ENCODE measurements at regions of chr21 and their contacts with region 1.

Region 1: GRCh38 chr21:34510148-34511142 is 1.6 kb downstream of the KCNE1 start:
- DNase-seq: peak; percentile 78
- H3K4me3 ChIP-seq: no peak overlapping the region
- H3K27ac ChIP-seq: no peak overlapping the region
- H3K4me1 ChIP-seq: no peaks in the 10 kb centered on the region
- H3K27me3 ChIP-seq: no peaks in the 10 kb centered on the region
- CTCF ChIP-seq: peak; percentile 69 to 94
- POLR2A ChIP-seq: no peak

Region 2: GRCh38 chr21:34498623-34499022 is 11.8 kb before region 1 on chr21:
- CTCF ChIA-PET with region 1: interaction called, 34 read pairs
- POLR2A ChIA-PET with region 1: no interaction called
- dilution Hi-C with region 1: no loop called
- intact Hi-C with region 1: no loop called
- DNase-seq: no peak
- H3K4me3 ChIP-seq: no peak overlapping the region
- H3K27ac ChIP-seq: no peak overlapping the region
- H3K4me1 ChIP-seq: no peaks in the 10 kb centered on the region
- H3K27me3 ChIP-seq: peaks cover 18 to 19% of the 10 kb centered on the region in 2 experiments
- CTCF ChIP-seq: no peak
- POLR2A ChIP-seq: no peak

Region 3: DNA sequence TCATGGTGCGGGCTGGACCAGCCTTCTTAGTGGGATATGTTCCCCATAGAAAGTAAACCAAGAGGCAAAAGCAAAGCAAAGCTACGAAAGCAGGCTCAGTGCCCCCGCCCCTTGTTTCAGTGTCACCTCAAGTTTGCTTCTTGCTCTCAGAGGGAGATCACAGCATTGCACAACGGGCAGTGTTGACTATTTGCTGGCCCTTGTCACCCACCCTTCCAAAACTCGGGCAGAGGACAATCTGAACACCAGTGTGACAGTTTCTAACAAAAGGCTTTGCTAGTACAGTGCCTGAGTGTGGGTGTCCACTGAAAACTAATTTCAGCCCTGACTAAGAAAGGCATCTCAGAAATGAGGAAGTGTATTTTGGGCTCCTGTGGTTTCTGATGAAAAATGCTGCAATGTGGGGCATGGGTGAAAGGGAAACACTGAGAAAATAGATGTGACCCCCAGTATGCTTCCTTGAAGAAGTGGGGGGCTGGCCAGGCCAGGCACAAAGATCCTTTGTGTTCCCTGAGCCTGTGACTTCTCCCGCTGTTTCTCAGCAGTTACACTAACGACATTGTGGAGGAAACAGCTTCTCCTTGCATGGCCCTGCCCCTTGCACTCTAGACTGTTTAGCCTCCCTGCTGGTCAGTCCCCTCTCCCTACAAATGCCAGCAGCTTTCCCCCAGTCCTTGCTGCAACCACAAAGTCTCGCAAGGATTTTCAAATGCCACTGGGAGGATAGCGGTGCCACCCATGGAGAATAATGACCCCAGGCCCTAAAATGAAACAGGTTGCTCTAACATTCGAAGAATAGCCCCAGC is 34.8 kb after region 1 on chr21:
- CTCF ChIA-PET with region 1: interaction called, 113 read pairs
- POLR2A ChIA-PET with region 1: no interaction called
- dilution Hi-C with region 1: no loop called
- intact Hi-C with region 1: loop called (anchors 1 kb)
- DNase-seq: peak; percentile 39
- H3K4me3 ChIP-seq: no peak overlapping the region
- H3K27ac ChIP-seq: no peak overlapping the region
- H3K4me1 ChIP-seq: no peaks in the 10 kb centered on the region
- H3K27me3 ChIP-seq: no peaks in the 10 kb centered on the region
- CTCF ChIP-seq: no peak
- POLR2A ChIP-seq: no peak

Region 4: DNA sequence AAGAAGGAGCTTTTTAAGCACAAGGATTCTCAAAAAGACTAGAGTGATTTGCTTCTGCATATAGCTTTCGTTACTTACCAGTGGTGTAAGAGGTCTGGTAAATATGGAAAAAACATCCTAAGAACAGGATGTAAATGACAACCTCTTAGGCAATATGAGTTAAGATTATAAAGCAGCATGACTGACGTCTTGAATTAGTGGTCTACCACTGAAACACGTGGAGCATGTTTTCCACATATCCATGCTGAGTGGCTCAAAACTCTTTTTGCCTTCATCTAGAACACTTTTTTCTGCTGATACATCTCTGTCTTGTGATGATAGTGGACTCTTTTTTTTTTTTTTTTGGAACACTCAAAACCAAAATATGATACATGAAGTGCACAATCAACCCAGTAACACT is 59.9 kb after region 1 on chr21:
- CTCF ChIA-PET with region 1: interaction called, 216 read pairs
- POLR2A ChIA-PET with region 1: interaction called, 5 read pairs
- dilution Hi-C with region 1: no loop called
- intact Hi-C with region 1: no loop called
- DNase-seq: no peak
- H3K4me3 ChIP-seq: no peak overlapping the region
- H3K27ac ChIP-seq: no peak overlapping the region
- H3K4me1 ChIP-seq: peaks cover 4% of the 10 kb centered on the region
- H3K27me3 ChIP-seq: no peaks in the 10 kb centered on the region
- CTCF ChIP-seq: no peak
- POLR2A ChIP-seq: no peak

Region 5: GRCh38 chr21:34625030-34625593 is 114.7 kb after region 1 on chr21:
- CTCF ChIA-PET with region 1: interaction called, 63 read pairs
- POLR2A ChIA-PET with region 1: no interaction called
- dilution Hi-C with region 1: no loop called
- intact Hi-C with region 1: loop called (anchors 1 kb)
- DNase-seq: no peak
- H3K4me3 ChIP-seq: no peak overlapping the region
- H3K27ac ChIP-seq: no peak overlapping the region
- H3K4me1 ChIP-seq: no peaks in the 10 kb centered on the region
- H3K27me3 ChIP-seq: peaks cover 17 to 20% of the 10 kb centered on the region in 2 experiments
- CTCF ChIP-seq: no peak
- POLR2A ChIP-seq: no peak